IMR-90 (cell line): ENCODE measurements at regions of chr2 and their contacts with region 1.

Region 1: DNA sequence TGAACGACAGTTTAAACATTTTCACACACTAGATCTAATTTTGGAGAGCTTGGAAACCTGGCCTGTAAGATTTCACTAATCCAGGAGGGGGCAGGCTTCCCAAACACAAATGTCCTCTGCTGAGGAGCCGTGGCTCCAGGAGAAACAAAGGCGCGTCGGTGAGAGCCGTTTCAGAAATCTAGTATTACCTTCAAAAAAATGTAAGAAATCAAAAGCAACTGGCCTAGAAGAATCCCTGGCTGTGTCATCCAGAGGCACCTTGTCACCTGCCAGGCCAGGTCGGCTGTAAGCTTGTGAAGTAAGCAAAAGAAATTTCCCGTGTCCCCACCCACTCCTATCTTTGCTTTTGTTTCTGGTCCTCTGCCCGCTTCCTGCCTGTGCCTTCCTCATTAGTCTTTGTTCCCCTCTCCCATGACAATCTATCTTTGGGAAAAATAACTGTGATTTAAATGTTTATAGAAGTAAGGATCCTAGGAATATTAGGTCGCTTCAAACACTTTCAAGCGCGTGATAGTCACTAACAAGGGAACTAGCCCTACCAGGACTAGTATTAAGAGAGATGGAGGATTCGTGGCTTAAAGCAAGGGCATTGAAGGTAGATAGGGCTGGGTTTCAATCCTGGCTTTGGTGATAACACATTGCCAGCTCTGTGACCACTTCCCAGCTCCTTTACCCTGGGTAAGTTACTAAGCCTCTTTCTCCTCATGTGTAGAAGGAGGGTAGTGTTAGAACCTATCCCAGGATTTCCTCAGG is 99.5 kb upstream of the STK39 start:
- DNase-seq: peak; percentile 63
- ATAC-seq: peak; percentile 91
- H3K4me3 ChIP-seq: peak overlapping the region; percentile 69
- H3K27ac ChIP-seq: peak overlapping the region; percentile 51; the same call in 1 of the 2 replicates
- H3K4me1 ChIP-seq: no peaks in the 10 kb centered on the region
- H3K27me3 ChIP-seq: no peaks in the 10 kb centered on the region; the same call in 1 of the 2 replicates
- CTCF ChIP-seq: peak; percentile 86
- POLR2A ChIP-seq: peak; percentile 28; the same call in 1 of the 2 replicates
- RAD21 ChIP-seq: peak; percentile 90

Region 2: DNA sequence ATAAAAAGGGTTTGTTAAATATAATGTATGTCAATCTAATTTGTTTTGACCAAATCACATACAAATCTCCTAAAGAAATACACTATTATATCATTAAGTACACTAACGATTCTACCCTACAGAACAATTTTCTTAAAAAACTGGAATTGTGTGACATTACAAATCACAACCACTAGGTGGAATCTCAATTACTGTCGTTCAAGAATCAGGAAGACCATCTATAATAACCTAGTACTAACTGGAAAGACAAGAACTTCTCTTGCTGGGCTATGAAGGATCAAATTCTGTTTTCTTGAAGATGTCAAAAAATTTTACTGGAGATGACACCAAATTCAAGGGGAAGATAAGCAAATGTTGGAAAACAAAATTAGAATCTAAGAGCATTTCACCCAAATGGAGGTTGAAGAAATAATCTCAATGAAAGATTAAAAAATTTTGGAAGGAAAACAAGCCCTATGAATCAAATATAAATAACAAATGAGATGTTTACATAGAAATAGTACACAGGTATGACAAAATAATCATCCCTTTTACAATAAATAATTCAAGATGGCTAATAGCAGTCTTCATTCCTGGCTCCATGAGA is 210.4 kb before region 1 on chr2:
- CTCF ChIA-PET with region 1: no interaction called
- POLR2A ChIA-PET with region 1: no interaction called
- dilution Hi-C with region 1: no loop called
- in situ Hi-C with region 1: no loop called
- intact Hi-C with region 1: loop called (anchors 5 kb)
- DNase-seq: peak; percentile 48
- ATAC-seq: 0 out of 2 replicates have a peak, but pooled peaks have one; percentile 36
- H3K4me3 ChIP-seq: no peak overlapping the region
- H3K27ac ChIP-seq: no peak overlapping the region
- H3K4me1 ChIP-seq: peaks cover 4% of the 10 kb centered on the region
- H3K27me3 ChIP-seq: no peaks in the 10 kb centered on the region
- CTCF ChIP-seq: peak; percentile 52
- POLR2A ChIP-seq: no peak
- RAD21 ChIP-seq: peak; percentile 47

Region 3: GRCh38 chr2:168687314-168687713 is 340.4 kb after region 1 on chr2:
- CTCF ChIA-PET with region 1: interaction called, 6 read pairs
- POLR2A ChIA-PET with region 1: interaction called, 3 read pairs
- dilution Hi-C with region 1: no loop called
- in situ Hi-C with region 1: no loop called
- intact Hi-C with region 1: loop called (anchors 1 kb)
- DNase-seq: peak; percentile 2
- ATAC-seq: peak; percentile 56
- H3K4me3 ChIP-seq: no peak overlapping the region
- H3K27ac ChIP-seq: no peak overlapping the region
- H3K4me1 ChIP-seq: peaks cover 6% of the 10 kb centered on the region
- H3K27me3 ChIP-seq: no peaks in the 10 kb centered on the region
- CTCF ChIP-seq: no peak
- POLR2A ChIP-seq: no peak
- RAD21 ChIP-seq: peak; percentile 23; the same call in 1 of the 2 replicates

Region 4: GRCh38 chr2:168731616-168732015 is 384.7 kb after region 1 on chr2:
- CTCF ChIA-PET with region 1: no interaction called
- POLR2A ChIA-PET with region 1: no interaction called
- dilution Hi-C with region 1: no loop called
- in situ Hi-C with region 1: no loop called
- intact Hi-C with region 1: no loop called
- DNase-seq: no peak
- ATAC-seq: no peak
- H3K4me3 ChIP-seq: no peak overlapping the region
- H3K27ac ChIP-seq: no peak overlapping the region
- H3K4me1 ChIP-seq: no peaks in the 10 kb centered on the region
- H3K27me3 ChIP-seq: no peaks in the 10 kb centered on the region
- CTCF ChIP-seq: no peak
- POLR2A ChIP-seq: no peak
- RAD21 ChIP-seq: no peak

Region 5: DNA sequence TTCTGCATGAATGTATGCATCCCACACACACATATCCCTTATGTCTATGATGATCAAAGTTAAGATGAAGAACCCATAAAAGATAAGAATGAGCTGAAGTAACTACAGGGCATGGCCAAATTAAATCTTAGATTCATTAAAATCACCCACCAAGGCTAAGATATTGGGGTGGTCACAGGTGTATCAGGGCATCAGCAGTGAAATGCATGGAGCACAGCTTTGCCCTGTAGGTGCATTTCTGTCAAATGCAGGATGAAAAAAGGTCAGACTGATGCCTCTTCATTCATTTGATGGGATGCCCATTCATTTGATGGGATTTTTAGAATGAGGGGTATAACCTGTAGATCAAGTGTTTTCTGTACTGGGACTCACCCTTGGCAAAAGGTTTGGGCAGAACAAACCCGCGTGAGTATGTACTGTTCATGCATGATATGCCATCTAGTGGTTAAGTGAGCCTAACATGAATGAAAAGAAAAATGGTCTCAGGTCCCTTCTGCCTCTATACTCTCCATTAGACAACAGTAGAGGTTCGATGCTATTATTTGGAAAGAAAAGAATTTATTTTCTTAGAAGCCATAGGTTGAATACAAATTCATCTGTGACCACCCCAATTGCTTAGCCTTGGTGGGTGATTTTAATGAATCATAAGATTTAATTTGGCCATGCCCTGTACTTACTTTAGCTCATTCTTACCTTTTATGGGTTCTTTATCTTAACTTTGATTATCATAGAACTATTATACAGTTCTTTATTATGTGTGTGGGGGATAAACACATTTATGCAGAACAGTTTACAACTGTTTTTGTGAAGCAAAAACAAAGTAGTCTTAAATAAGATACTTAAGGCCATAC is 412.3 kb after region 1 on chr2:
- CTCF ChIA-PET with region 1: interaction called, 3 read pairs
- POLR2A ChIA-PET with region 1: no interaction called
- dilution Hi-C with region 1: no loop called
- in situ Hi-C with region 1: loop called (anchors 5 kb)
- intact Hi-C with region 1: loop called (anchors 1 kb)
- DNase-seq: peak; percentile 59
- ATAC-seq: peak; percentile 95
- H3K4me3 ChIP-seq: no peak overlapping the region
- H3K27ac ChIP-seq: no peak overlapping the region
- H3K4me1 ChIP-seq: no peaks in the 10 kb centered on the region
- H3K27me3 ChIP-seq: no peaks in the 10 kb centered on the region
- CTCF ChIP-seq: peak; percentile 62
- POLR2A ChIP-seq: no peak
- RAD21 ChIP-seq: peak; percentile 66

Region 6: GRCh38 chr2:168920504-168921157 is 573.7 kb after region 1 on chr2:
- CTCF ChIA-PET with region 1: interaction called, 3 read pairs
- POLR2A ChIA-PET with region 1: no interaction called
- dilution Hi-C with region 1: no loop called
- in situ Hi-C with region 1: loop called (anchors 5 kb)
- intact Hi-C with region 1: loop called (anchors 1 kb)
- DNase-seq: peak; percentile 34
- ATAC-seq: peak; percentile 57; the same call in 1 of the 2 replicates
- H3K4me3 ChIP-seq: no peak overlapping the region
- H3K27ac ChIP-seq: no peak overlapping the region
- H3K4me1 ChIP-seq: no peaks in the 10 kb centered on the region
- H3K27me3 ChIP-seq: peaks cover 6% of the 10 kb centered on the region
- CTCF ChIP-seq: peak; percentile 67
- POLR2A ChIP-seq: no peak
- RAD21 ChIP-seq: peak; percentile 76